ENCODE measurements at regions of chr2 and their contacts with region 1.

Region 1: GRCh38 chr2:51528156-51528555 is 496.2 kb upstream of the NRXN1 start:
- DNase-seq: no peak
- ATAC-seq: no peak
- H3K4me3 ChIP-seq: no peak overlapping the region
- H3K27ac ChIP-seq: no peak overlapping the region
- H3K4me1 ChIP-seq: no peaks in the 10 kb centered on the region
- H3K27me3 ChIP-seq: no peaks in the 10 kb centered on the region
- CTCF ChIP-seq: no peak

Region 2: DNA sequence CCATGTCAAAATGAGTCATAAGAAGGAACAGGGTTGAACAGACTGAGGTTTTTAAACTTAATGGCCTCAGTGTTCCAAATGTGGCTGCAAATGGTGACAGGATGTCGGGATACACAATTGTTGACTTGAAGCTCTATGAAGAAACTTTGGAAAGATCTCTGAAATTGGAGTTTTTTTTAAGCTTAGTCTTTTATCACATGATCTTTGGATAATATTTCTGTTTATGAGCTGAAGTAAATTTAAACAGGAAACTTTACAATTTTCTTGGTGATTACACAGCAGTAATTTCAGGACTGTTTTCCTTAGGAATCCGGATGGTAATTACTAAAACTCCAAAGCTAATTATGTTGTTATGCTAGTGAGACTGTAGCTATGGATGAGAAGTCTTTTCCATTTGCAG is 297.1 kb before region 1 on chr2:
- CTCF ChIA-PET with region 1: no interaction called
- POLR2A ChIA-PET with region 1: no interaction called
- in situ Hi-C with region 1: no loop called
- intact Hi-C with region 1: no loop called
- DNase-seq: no peak
- ATAC-seq: no peak
- H3K4me3 ChIP-seq: no peak overlapping the region
- H3K27ac ChIP-seq: no peak overlapping the region
- H3K4me1 ChIP-seq: no peaks in the 10 kb centered on the region
- H3K27me3 ChIP-seq: no peaks in the 10 kb centered on the region
- CTCF ChIP-seq: no peak

Region 3: DNA sequence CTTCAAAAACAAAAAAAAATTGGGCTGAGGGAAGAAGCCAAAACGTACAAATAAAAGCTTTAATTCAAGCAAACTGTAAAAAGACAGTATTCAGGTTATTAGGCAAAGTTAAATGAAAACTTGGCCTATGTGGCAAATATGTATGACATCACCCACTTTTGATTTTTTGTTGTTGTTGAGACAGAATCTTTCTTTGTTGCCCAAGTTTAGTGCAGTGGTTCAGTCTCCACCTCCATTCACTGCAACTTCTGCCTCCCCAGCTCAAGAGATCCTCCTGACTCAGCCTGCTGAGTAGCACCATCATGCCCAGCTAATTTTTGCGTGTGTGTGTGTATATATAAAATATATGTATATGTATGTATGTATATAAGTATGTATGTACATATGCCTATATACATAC is 55.9 kb before region 1 on chr2:
- CTCF ChIA-PET with region 1: no interaction called
- POLR2A ChIA-PET with region 1: no interaction called
- in situ Hi-C with region 1: no loop called
- intact Hi-C with region 1: loop called (anchors 2 kb)
- DNase-seq: no peak
- ATAC-seq: no peak
- H3K4me3 ChIP-seq: no peak overlapping the region
- H3K27ac ChIP-seq: no peak overlapping the region
- H3K4me1 ChIP-seq: no peaks in the 10 kb centered on the region
- H3K27me3 ChIP-seq: no peaks in the 10 kb centered on the region
- CTCF ChIP-seq: no peak